Panc1 (cell line): ENCODE measurements at regions of chr2 and their contacts with region 1.

Region 1: GRCh38 chr2:73253901-73254300 is 19.8 kb downstream of the CCT7 start:
- DNase-seq: no peak
- ATAC-seq: no peak
- H3K4me3 ChIP-seq: no peak overlapping the region
- H3K27ac ChIP-seq: no peak overlapping the region
- H3K4me1 ChIP-seq: no peaks in the 10 kb centered on the region
- H3K27me3 ChIP-seq: no peaks in the 10 kb centered on the region
- CTCF ChIP-seq: no peak

Region 2: DNA sequence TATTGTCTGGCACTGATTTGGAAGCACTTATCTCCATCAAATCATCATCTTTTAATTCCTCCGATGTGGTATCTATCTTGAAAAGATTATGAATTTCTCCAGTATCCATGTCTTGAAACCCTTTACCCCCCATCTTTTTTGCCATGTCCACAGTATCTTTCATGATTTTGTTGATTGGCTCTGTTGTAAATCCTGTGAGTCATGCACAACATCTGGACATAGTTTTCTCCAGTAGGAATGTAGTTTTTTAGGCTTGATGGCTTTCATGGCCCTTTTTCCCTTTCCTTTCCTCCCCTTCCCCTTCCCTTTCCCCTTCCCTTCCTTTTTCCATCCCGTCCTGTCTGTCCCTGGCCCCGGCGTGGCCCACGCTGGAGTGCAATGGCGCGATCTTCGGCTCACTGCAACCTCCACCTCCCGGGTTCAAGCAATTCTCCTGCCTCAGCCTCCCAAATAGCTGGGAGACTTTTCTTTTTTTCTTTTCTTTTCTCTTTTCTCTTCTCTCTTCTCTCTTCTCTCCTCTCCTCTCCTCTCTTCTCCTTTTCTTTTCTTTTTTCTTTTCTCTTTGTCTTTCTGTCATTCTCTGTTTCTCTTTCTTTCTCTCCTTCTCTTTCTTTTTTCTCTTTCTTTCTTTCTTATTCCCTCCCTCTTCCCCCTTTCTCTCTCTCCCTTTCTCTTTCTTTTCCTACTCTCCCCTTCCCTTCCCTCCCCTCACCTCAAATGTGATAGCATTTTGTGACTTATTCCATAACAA is 1940.7 kb before region 1 on chr2:
- CTCF ChIA-PET with region 1: no interaction called
- POLR2A ChIA-PET with region 1: no interaction called
- in situ Hi-C with region 1: no loop called
- intact Hi-C with region 1: no loop called
- DNase-seq: no peak
- ATAC-seq: no peak
- H3K4me3 ChIP-seq: no peak overlapping the region
- H3K27ac ChIP-seq: no peak overlapping the region
- H3K4me1 ChIP-seq: no peaks in the 10 kb centered on the region
- H3K27me3 ChIP-seq: no peaks in the 10 kb centered on the region
- CTCF ChIP-seq: no peak

Region 3: GRCh38 chr2:73187549-73187948 is 66.4 kb before region 1 on chr2:
- CTCF ChIA-PET with region 1: no interaction called
- POLR2A ChIA-PET with region 1: interaction called, 10 read pairs
- in situ Hi-C with region 1: no loop called
- intact Hi-C with region 1: no loop called
- DNase-seq: no peak
- ATAC-seq: no peak
- H3K4me3 ChIP-seq: no peak overlapping the region
- H3K27ac ChIP-seq: no peak overlapping the region
- H3K4me1 ChIP-seq: no peaks in the 10 kb centered on the region
- H3K27me3 ChIP-seq: peaks cover 9% of the 10 kb centered on the region
- CTCF ChIP-seq: no peak